Psoas muscle (tissue), 8 donors: ENCODE measurements at regions of chr16 and their contacts with region 1.

Region 1: DNA sequence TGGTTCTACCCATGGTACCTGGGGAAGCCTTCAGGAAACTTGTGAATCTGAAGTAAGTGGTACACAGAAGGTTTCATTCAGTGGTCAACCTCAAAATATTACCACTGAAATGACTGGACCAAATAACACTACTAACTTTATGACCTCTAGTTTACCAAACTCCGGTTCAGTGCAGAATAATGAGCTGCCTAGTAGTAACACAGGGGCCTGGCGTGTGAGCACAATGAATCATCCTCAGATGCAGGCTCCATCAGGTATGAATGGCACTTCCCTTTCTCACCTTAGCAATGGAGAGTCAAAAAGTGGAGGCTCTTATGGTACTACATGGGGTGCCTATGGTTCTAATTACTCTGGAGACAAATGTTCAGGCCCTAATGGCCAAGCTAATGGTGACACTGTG is 55.9 kb upstream of the SLC5A11 start:
- DNase-seq: no peak
- ATAC-seq: no peak
- H3K4me3 ChIP-seq: no peak overlapping the region
- H3K27ac ChIP-seq: no peak overlapping the region
- H3K4me1 ChIP-seq: peaks cover 8% of the 10 kb centered on the region
- H3K27me3 ChIP-seq: no peaks in the 10 kb centered on the region
- CTCF ChIP-seq: no peak

Region 2: GRCh38 chr16:24552705-24553246 is 237.1 kb before region 1 on chr16:
- intact Hi-C with region 1: loop called in 1 of 2 experiments (anchors 5 kb)
- DNase-seq: no peak
- ATAC-seq: no peak
- H3K4me3 ChIP-seq: no peak overlapping the region
- H3K27ac ChIP-seq: no peak overlapping the region
- H3K4me1 ChIP-seq: no peaks in the 10 kb centered on the region
- H3K27me3 ChIP-seq: no peaks in the 10 kb centered on the region
- CTCF ChIP-seq: no peak

Region 3: GRCh38 chr16:24758373-24758772 is 31.5 kb before region 1 on chr16:
- intact Hi-C with region 1: loop called in 1 of 2 experiments (anchors 2 kb)
- DNase-seq: no peak
- ATAC-seq: no peak
- H3K4me3 ChIP-seq: no peak overlapping the region
- H3K27ac ChIP-seq: peak overlapping the region; percentile 6
- H3K4me1 ChIP-seq: peaks cover 39% of the 10 kb centered on the region
- H3K27me3 ChIP-seq: no peaks in the 10 kb centered on the region
- CTCF ChIP-seq: no peak

Region 4: GRCh38 chr16:24918641-24919040 is 128.8 kb after region 1 on chr16:
- intact Hi-C with region 1: no loop called
- DNase-seq: no peak
- ATAC-seq: no peak
- H3K4me3 ChIP-seq: no peak overlapping the region
- H3K27ac ChIP-seq: no peak overlapping the region
- H3K4me1 ChIP-seq: no peaks in the 10 kb centered on the region
- H3K27me3 ChIP-seq: no peaks in the 10 kb centered on the region
- CTCF ChIP-seq: no peak

Region 5: DNA sequence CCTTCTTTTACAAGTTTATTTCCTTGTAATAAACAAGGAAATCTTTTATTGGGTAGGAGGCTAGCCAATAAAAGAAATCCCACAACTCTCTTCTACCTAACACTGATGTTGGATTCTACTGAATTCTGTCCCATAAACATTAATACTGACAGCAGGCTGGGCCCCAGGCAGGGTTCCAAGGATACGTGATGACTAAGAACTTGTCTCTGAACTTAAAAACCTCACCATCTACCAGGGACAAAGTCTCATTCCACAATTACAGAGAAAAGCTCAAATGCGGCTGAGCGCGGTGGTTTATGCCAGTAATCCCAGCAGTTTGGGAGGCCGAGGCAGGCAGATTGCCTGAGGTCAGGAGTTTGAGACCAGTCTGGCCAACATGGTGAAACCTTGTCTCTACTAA is 160.4 kb after region 1 on chr16:
- intact Hi-C with region 1: no loop called
- DNase-seq: no peak
- ATAC-seq: no peak
- H3K4me3 ChIP-seq: no peak overlapping the region
- H3K27ac ChIP-seq: no peak overlapping the region
- H3K4me1 ChIP-seq: no peaks in the 10 kb centered on the region
- H3K27me3 ChIP-seq: no peaks in the 10 kb centered on the region
- CTCF ChIP-seq: no peak